ENCODE measurements at regions of chr15 and their contacts with region 1.

Region 1: DNA sequence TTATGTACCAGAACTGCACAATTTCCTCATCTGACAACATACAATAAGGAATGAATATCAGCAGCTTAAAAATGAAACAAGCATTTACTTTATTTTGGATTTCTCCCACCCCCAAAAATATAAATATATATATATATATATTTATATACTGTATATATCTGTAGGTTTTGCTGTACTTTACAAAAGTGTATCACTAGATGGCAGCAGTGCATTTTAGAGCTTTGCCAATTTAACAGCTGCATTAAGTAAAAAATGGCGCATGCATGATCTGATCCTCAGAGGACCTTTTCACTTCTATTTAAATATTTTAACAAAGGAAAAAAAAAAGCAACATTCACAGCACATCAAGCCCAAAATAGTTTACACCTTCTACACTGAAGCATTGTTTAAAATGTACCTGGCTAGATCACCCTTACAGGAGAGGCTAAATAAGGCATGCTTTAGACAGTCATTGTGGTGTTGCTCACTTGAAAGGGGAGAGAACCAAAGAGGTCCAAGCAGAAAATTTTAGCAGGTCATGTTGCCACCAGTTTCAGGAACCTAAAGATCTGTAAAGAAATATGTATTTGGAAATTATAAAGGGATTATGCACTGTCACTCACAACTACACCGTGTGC is 72.6 kb downstream of the NPTN start:
- DNase-seq: peak; percentile 46
- ATAC-seq: peak; percentile 51; the same call in 1 of the 2 replicates
- H3K4me3 ChIP-seq: no peak overlapping the region
- H3K27ac ChIP-seq: no peak overlapping the region
- H3K4me1 ChIP-seq: peaks cover 10 to 13% of the 10 kb centered on the region in 2 experiments
- H3K27me3 ChIP-seq: no peaks in the 10 kb centered on the region
- CTCF ChIP-seq: peak; percentile 36 to 59 (median 43); a peak in 4 of 6 replicates
- POLR2A ChIP-seq: no peak
- RAD21 ChIP-seq: peak; percentile 64

Region 2: DNA sequence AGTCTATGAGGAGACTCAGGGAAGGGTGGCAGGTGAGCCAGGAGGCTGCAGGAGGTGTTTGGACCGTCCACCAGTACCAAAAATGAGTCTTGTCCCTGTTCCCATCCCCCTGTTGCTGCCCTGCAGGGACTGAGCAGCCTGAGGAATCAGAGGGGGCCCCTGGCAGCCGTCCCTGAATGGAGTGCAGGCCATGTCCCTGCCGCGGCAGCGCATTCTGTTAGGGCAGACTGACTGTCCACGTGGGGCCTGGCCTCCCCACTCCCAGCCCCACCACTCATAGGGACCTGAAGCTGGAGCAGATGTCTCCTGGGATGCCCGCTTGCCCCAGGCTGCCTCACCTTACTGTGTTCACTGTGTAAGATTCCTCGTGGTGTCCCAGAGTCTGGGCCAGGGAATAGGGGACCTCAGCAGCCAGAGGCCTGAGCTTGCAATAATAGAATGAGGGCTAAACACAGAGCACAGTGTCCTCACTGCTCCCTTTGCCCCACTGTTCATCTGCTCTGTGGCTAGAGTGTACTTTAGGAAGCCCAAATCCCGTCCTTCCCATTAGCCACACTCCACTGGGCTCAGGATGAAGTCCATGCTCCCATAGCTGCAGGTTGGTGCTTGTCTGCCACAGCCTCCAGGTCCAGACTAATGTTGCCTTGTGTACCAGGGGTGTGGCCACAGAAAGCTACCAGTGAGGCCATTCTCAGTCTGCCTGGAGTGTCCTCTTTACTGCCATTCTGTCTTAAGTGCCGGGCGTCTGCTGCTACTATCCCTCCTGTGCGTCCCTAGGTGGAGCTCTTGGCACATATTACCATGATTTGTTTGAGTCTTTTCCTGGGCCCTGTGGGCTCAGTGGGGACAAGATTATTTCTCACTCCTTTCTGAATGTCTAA is 255.0 kb before region 1 on chr15:
- CTCF ChIA-PET with region 1: interaction called, 5 read pairs
- POLR2A ChIA-PET with region 1: no interaction called
- RAD21 ChIA-PET with region 1: no interaction called
- intact Hi-C with region 1: loop called (anchors 5 kb)
- DNase-seq: peak; percentile 61
- ATAC-seq: peak; percentile 98
- H3K4me3 ChIP-seq: no peak overlapping the region
- H3K27ac ChIP-seq: no peak overlapping the region
- H3K4me1 ChIP-seq: no peaks in the 10 kb centered on the region
- H3K27me3 ChIP-seq: no peaks in the 10 kb centered on the region
- CTCF ChIP-seq: peak; percentile 80 to 85 (median 81)
- POLR2A ChIP-seq: no peak
- RAD21 ChIP-seq: peak; percentile 85

Region 3: DNA sequence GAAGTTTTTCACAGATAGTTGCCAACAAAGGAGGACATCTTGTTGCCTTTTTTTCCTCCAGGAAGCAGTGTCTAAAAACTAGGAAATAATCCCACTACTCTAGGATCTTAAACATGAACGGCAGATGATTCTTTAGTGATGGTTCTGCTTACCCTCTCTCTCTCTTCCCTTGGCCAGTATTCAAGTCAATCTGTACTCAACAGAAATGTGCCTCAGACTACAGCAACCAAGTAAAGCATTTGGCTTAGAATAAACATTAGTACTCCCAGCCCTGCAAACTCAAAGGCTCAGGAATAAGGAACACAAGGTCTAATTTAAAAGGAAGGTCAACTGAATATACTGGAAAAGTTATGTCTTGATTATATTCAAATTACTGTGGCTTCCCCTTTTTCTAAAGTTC is 63.9 kb after region 1 on chr15:
- CTCF ChIA-PET with region 1: no interaction called
- POLR2A ChIA-PET with region 1: no interaction called
- RAD21 ChIA-PET with region 1: no interaction called
- intact Hi-C with region 1: no loop called
- DNase-seq: no peak
- ATAC-seq: no peak
- H3K4me3 ChIP-seq: no peak overlapping the region
- H3K27ac ChIP-seq: no peak overlapping the region
- H3K4me1 ChIP-seq: no peaks in the 10 kb centered on the region
- H3K27me3 ChIP-seq: no peaks in the 10 kb centered on the region
- CTCF ChIP-seq: no peak
- POLR2A ChIP-seq: no peak
- RAD21 ChIP-seq: no peak

Region 4: DNA sequence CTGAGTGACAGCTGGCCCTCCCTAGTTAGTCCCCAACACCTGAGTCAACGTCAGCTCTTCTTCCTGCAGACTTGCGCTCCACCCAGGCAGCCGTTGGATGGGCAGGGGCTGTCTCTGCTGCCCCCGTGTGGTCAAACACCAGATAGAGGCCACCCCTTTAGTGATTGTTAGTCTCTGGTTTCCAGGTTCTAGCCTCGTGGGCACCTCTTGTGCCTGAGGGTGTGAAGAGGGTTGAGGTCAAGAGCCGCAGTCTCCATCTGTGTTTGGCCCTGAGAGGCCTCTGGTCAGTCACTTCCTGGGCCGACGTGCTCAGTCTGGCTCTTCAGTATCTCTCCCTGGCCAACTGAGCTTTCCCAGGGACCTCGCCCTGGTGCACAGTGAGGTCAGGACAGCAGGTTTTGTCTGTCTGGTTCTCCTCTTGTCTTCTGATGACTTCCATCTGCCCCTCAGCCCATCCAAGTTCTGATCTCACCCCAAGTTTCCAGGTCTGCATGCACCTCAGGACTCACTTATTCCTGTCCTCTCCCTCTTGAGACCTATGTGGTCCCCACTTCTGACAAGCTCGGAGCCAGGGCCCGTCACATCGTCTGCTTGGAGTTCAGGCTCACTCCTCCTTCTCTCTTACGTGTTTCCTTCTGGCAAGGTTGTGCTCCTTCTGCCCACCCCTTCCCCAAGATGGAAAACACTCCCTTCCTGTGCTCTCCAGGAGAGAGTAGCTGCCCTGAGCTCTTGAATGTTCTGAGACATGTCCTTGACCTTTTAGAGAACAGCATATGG is 144.4 kb after region 1 on chr15:
- CTCF ChIA-PET with region 1: interaction called, 33 read pairs
- POLR2A ChIA-PET with region 1: no interaction called
- RAD21 ChIA-PET with region 1: interaction called in 1 of 2 experiments, 5 read pairs
- intact Hi-C with region 1: loop called (anchors 1 kb)
- DNase-seq: no peak
- ATAC-seq: peak; percentile 87
- H3K4me3 ChIP-seq: no peak overlapping the region
- H3K27ac ChIP-seq: no peak overlapping the region
- H3K4me1 ChIP-seq: peaks cover 0 to 2% of the 10 kb centered on the region in 2 experiments; a peak in 1 of 4 replicates
- H3K27me3 ChIP-seq: no peaks in the 10 kb centered on the region
- CTCF ChIP-seq: peak; percentile 78 to 92 (median 90)
- POLR2A ChIP-seq: no peak
- RAD21 ChIP-seq: peak; percentile 74

Region 5: GRCh38 chr15:73781038-73781925 is 220.7 kb after region 1 on chr15:
- CTCF ChIA-PET with region 1: no interaction called
- POLR2A ChIA-PET with region 1: no interaction called
- RAD21 ChIA-PET with region 1: no interaction called
- intact Hi-C with region 1: loop called (anchors 10 kb)
- DNase-seq: no peak
- ATAC-seq: peak; percentile 87
- H3K4me3 ChIP-seq: no peak overlapping the region
- H3K27ac ChIP-seq: no peak overlapping the region
- H3K4me1 ChIP-seq: 0 out of 4 replicates have a peak, but pooled peaks cover 0 to 2% of the 10 kb centered on the region in 2 experiments
- H3K27me3 ChIP-seq: no peaks in the 10 kb centered on the region
- CTCF ChIP-seq: peak; percentile 43 to 57 (median 48); a peak in 5 of 6 replicates
- POLR2A ChIP-seq: no peak
- RAD21 ChIP-seq: peak; percentile 70

Region 6: DNA sequence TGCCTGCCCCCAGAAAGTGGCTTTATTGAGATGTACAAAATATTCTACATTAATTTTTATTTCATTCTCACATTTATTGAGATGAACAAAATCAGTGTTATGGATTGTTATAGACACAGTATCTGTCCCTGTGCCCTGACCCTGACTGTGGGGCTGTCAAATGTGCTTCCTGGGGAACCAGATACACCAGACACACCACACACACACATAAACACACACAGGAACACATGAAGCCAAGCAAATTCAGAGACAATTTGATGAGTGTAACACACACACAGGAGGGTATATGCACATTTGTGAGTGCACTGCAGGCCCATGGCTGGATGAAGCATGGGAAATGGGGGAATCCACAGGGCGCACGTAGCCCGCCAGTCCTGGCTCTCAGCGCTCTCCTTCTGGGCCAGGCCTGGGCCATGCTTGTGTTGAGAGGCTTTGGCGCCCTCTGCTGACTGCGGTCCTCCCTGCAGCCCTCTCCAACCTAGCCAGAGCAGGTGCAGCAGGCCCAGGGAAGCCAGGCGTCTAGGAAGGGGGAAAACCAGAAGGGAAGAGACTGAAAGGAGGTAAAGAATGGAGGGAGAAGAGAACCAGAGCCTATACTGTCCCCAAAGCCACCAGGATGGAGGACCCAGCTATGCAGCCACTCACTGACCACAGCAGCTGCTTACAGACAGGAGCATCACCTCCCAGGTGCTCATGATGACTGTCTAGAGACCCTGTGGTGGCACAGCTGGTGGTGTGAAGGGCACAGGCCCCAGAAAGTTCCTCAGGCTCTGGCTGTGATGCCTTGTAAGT is 347.6 kb after region 1 on chr15:
- CTCF ChIA-PET with region 1: no interaction called
- POLR2A ChIA-PET with region 1: no interaction called
- RAD21 ChIA-PET with region 1: no interaction called
- intact Hi-C with region 1: no loop called
- DNase-seq: peak; percentile 32
- ATAC-seq: peak; percentile 100
- H3K4me3 ChIP-seq: no peak overlapping the region
- H3K27ac ChIP-seq: no peak overlapping the region
- H3K4me1 ChIP-seq: no peaks in the 10 kb centered on the region
- H3K27me3 ChIP-seq: no peaks in the 10 kb centered on the region
- CTCF ChIP-seq: peak; percentile 78 to 95 (median 94)
- POLR2A ChIP-seq: no peak
- RAD21 ChIP-seq: peak; percentile 82